ENCODE measurements at regions of chr19 and their contacts with region 1.

Region 1: DNA sequence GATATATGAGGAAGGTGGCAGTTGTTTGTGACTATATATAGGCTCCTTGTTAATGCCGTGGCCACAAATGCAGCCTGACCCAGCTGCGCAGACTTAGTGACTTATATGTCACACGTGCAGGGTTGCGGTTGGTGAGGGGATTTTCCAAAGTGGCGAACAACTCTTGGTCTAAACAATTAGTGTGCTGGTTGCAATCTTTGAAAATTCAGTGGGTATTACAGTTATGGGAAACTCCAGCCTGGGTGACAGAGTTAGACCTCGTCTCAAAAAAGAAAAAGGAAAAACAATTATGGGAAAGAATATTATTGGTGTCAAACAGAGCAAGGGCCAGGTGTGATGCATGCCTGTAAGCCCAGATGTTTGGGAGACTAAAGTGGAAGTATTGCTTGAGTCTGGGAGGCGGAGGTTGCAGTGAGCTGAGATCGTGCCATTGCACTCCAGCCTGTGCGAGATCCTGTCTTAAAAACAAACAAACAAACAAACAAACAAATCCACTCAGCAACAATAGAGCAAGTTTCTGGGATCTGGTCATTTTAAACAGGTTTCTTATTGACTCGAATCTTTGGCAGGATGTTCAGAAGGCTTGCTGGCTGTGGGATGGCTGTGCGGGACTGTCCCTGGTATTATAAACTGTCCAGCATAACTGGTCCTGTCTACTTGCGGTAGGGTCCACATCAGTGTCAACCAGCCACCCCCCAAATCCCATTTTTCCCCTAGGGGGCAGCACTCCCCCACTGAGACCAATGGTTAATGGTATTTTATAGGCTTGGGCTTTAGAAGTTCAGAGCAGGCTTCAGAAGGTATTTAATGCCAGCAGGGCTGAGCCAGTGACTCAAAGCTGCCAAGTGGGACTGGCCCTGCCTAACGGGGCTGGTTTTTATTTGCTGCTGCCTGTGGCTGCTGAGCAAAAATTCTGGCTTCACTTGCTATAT is 15.4 kb downstream of the RELB start:
- H3K4me3 ChIP-seq: no peak overlapping the region
- H3K27ac ChIP-seq: no peak overlapping the region
- H3K4me1 ChIP-seq: no peaks in the 10 kb centered on the region; the same call in 1 of the 2 replicates
- CTCF ChIP-seq: peak; percentile 62

Region 2: DNA sequence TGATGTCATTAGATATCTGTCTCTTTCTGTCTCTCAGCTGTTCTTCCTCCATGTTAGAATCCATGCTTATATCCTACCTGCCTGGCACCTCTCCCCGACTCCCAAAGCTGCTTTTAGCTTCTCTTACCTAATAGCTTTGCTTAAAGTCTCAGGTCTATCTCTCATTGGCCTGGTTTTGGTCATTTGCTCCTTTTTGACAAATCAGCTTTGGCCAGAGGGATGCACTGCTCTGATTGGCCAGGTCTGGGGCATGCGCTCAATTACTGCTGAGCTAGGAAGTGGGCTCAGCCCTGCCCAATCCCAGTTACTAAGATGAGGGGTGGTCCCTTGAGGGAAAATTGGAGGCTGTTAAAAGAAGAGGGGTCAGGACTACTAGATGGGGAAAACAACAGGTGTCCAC is 10.7 kb after region 1 on chr19:
- CTCF ChIA-PET with region 1: interaction called, 10 read pairs
- POLR2A ChIA-PET with region 1: no interaction called
- H3K4me3 ChIP-seq: no peak overlapping the region
- H3K27ac ChIP-seq: no peak overlapping the region
- H3K4me1 ChIP-seq: no peaks in the 10 kb centered on the region
- CTCF ChIP-seq: no peak

Region 3: DNA sequence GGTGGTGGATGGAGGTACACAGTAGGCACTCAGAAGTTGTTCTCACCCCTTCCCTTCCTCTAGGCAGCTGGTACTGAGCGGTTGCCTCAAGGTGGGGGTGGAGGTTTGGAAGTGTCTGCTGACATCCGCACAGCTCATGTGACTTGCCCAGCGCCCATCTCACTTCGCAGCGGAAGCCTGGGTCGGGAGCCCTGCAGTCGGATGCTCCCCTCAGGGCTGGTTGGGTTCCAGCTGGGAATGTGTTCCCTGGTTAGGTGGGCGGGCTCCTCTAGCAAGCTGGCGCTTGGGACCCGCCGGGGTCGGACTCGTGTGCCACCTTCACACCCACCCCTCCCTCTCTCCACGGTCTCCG is 86.5 kb after region 1 on chr19:
- CTCF ChIA-PET with region 1: no interaction called
- POLR2A ChIA-PET with region 1: no interaction called
- H3K4me3 ChIP-seq: no peak overlapping the region
- H3K27ac ChIP-seq: no peak overlapping the region
- H3K4me1 ChIP-seq: peaks cover 22% of the 10 kb centered on the region
- CTCF ChIP-seq: no peak

Measured in HEK293 (cell line).